AG04449 (cell line): ENCODE measurements at regions of chr17 and their contacts with region 1.

Region 1: DNA sequence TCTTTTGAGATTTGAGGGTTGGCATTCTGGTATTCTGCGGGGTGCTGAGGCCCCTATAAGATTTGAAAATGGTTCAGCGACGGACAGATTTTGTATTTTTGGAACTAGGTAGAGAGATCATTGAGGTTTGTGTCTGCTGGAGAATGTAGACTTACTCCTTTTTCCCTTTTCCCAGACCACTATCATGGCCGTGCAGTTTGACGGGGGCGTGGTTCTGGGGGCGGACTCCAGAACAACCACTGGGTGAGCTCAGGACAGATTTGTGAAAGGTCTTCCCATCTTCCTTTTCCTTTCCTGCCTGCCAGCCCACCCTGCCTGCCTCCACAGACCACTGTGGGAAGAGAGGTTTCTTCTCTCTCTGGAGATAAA is 573 bp downstream of the PSMB6 start:
- DNase-seq: no peak
- H3K4me3 ChIP-seq: peak overlapping the region; percentile 100
- CTCF ChIP-seq: no peak

Region 2: DNA sequence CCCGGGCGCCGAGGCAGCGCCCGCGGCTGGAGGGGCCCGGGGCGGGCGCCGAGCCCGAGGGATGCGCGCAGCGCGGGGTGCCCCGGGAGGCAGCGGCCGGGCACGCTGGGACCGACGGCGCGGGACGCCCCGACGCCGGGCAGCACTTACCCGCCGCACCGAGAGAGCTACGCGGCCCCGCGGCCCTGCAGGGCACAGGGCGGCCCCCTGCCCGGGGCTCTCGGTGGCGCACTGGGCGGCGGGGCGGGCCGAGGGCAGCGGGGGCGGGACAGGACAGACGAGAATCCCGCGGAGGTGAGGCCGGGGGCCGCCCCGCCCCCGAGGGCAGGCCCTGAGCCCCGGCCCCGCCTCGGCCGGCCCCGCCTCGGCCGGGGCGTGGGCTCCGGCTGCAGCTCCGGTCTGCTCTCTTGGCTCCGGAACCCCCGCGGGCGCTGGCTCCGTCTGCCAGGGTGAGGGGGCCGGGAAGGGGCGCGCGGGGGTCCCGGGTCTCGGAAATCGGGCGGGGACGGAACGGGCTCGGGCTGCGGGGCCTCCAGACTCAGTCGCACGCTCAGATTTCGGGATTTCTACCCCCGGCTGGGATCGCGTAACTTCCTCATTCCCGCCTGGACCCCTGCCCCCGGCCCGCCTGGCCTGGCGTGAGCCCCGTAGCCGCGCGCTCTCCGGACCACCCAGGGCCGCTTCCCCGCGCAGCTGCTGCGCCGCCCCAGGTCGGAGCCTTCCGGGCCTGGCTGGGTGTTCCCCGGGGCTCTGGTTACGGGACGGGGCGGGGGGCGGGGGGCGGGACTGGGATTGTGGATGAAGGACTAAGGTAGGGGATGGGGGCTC is 10.5 kb after region 1 on chr17 and contains the start of gene PLD2:
- CTCF ChIA-PET with region 1: interaction called, 4 read pairs
- POLR2A ChIA-PET with region 1: interaction called, 19 read pairs
- DNase-seq: no peak
- H3K4me3 ChIP-seq: peak within 1 kb of the TSS; percentile 72
- CTCF ChIP-seq: no peak